Activated T-helper 1 cell treated with anti-CD3 and anti-CD28 coated beads, Interleukin-12 subunit alpha, Interleukin-12 subunit beta, Interleukin-2, Interleukin-4 antibody, amounts not matched to agents 30 ng/mL and 10 ng/mL and 1 ng/mL, durations not matched to agents 14 hours and 24 hours and 36 hours (primary cell): ENCODE measurements at regions of chr16 and their contacts with region 1.

Region 1: GRCh38 chr16:66928702-66929388 is 3.5 kb upstream of the RRAD start:
- DNase-seq: no peak
- H3K4me3 Mint-ChIP-seq: no peak overlapping the region
- H3K27ac Mint-ChIP-seq: peak overlapping the region; percentile 61
- H3K4me1 Mint-ChIP-seq: peaks cover 52% of the 10 kb centered on the region
- H3K27me3 Mint-ChIP-seq: peaks cover 11% of the 10 kb centered on the region

Region 2: GRCh38 chr16:66894948-66895688 is 33.7 kb before region 1 on chr16:
- intact Hi-C with region 1: loop called (anchors 1 kb)
- DNase-seq: peak; percentile 44
- H3K4me3 Mint-ChIP-seq: no peak overlapping the region
- H3K27ac Mint-ChIP-seq: peak overlapping the region; percentile 4
- H3K4me1 Mint-ChIP-seq: peaks cover 24% of the 10 kb centered on the region
- H3K27me3 Mint-ChIP-seq: no peaks in the 10 kb centered on the region